PC-9 (cell line): ENCODE measurements at regions of chr6 and their contacts with region 1.

Region 1: DNA sequence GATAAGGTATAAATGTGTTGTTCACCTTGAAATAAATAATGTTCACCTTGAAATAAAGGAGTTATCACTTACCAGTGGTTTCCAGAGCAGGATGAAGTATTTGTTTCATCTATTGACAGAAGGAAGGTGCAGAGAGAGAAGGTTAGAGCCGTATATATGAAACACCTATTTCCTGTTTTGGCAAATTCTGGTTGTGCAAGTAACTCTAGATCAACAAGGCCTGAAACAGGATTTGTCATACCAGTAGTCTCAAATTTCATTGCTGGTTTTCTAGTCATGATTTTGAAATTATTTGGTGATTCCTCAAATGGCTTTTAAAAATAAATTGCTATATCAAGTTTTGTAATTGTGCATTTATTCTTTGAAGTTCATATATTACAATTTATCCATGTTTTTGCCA is at the start of gene CRISP3:
- DNase-seq: peak in 1 of 2 experiments; percentile 38
- H3K4me3 ChIP-seq: no peak within 1 kb of the TSS
- H3K27ac ChIP-seq: no peak within 1 kb of the TSS
- H3K4me1 ChIP-seq: 0 out of 2 replicates have a peak, but pooled peaks cover 5% of the 10 kb centered on the region
- H3K27me3 ChIP-seq: no peaks in the 10 kb centered on the region
- CTCF ChIP-seq: no peak
- total RNA-seq, gene CRISP3: 0.48 and 0.79 TPM in 2 replicates

Region 2: DNA sequence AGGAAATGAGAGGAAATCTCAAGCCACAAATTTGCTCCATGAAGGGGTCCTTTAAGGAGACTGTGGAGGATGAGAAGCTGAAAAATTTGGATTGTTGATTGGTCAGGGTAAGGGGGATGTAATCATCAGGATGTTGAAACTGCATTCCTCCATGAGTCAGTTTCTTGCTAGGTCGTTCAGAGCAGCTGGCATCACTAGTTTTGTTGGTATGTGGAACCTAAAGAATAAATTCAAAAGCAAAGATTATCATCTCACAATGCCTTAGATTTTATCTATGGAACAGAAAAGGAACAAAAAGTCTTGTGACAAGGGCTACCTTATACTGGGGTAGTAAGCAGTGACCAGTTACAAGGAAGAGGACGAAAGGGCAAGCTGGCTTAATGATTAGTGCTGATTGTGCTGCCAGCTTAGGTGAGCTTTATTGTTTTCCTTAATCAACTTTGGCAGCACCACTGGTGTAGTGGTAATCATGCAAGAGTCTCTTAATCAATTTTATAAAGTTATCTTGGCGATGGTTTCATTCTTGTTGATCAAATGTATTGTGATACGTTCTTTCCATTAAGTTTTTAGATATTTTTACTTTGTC is 67.5 kb before region 1 on chr6:
- CTCF ChIA-PET with region 1: no interaction called
- POLR2A ChIA-PET with region 1: no interaction called
- intact Hi-C with region 1: loop called (anchors 5 kb)
- DNase-seq: peak; percentile 25 to 72
- H3K4me3 ChIP-seq: no peak overlapping the region
- H3K27ac ChIP-seq: no peak overlapping the region
- H3K4me1 ChIP-seq: peaks cover 11% of the 10 kb centered on the region; the same call in 1 of the 2 replicates
- H3K27me3 ChIP-seq: no peaks in the 10 kb centered on the region
- CTCF ChIP-seq: no peak

Region 3: DNA sequence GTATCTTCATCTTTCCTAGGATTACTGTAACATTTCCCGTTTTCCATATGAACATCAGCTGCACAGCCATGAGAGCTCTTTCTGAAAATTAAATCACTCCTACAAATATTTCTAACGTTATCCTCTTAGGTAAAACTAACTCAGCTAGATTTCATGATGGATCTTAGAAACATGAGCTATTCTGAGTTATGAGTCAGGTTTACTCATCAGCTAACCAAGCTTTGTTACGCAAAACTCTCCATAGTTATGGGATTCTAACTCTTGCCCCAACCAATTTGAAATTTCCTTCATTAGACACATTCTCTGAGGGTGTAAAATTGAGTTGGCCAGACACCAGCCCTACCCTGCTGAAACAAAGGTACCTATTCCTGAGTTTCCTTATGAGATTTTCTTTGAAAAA is 263.6 kb after region 1 on chr6:
- CTCF ChIA-PET with region 1: no interaction called
- POLR2A ChIA-PET with region 1: no interaction called
- intact Hi-C with region 1: no loop called
- DNase-seq: peak in 1 of 2 experiments; percentile 43
- H3K4me3 ChIP-seq: no peak overlapping the region
- H3K27ac ChIP-seq: no peak overlapping the region
- H3K4me1 ChIP-seq: no peaks in the 10 kb centered on the region
- H3K27me3 ChIP-seq: no peaks in the 10 kb centered on the region
- CTCF ChIP-seq: no peak